ENCODE measurements at regions of chr6 and their contacts with region 1.

Region 1: DNA sequence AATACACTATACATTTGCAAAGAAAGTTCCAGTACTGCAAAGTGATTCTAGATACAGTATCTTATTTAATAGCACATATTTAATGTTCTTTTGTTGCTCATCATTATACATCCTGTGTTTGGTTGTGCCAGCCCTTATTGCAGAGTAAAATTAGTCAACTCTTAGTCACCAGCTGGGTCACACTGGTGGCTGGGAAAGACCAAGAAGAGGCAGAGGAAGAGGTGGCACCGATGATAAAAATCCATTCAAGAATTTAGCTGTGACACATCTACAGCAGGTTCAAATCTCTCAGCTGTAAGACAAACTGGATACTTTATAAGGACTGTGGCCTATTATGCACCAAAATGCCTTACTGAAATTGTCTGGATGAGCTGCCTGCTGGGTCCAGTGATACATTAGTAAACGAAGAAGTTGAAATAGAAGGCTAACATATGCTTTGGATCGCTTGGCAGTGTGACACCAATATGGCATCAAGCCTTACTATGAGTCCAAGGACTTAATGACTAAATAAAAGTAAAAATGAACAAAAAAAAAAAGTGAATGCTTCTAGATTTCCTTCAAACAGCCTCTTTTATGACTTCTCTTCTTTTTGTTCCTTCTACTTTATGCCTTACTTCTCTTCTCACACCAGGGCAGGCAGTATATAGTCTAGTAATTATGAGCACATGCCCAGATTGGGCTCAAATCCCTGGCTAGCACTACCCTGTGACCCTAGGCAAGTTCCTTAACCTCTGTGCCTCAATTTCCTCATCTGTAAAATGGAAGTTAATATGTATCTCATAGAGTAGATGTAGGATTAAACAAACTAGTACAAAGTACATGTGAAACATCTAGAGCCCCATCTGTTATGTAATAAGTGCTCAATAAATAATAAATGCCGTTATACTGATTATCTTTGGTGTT is 29.4 kb upstream of the RNF8 start:
- DNase-seq: no peak
- ATAC-seq: no peak
- H3K4me3 Mint-ChIP-seq: no peak overlapping the region
- H3K27ac Mint-ChIP-seq: no peak overlapping the region
- H3K4me1 Mint-ChIP-seq: peaks cover 7% of the 10 kb centered on the region
- H3K27me3 Mint-ChIP-seq: no peaks in the 10 kb centered on the region

Region 2: DNA sequence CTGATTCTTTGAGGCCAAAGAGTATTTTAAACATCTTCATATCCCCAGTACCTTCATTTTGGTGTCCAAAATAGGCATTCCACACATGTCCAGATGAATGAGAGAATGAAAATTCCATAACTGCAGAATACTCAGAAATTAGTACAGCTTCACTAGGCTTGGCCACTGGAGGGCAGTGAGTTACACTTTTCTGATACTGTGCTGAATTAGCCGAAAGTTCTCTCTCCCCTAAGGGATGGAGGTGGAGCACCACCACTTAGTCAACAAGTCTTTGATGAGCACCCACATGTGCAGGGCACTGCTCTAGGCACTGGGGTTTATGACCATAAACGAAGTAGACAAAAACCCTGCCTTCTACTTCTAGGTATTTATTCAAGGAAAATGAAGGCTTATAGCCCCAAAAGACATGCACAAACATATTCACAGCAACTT is 20.4 kb before region 1 on chr6:
- CTCF ChIA-PET with region 1: interaction called, 25 read pairs
- POLR2A ChIA-PET with region 1: no interaction called
- DNase-seq: peak; percentile 33
- ATAC-seq: no peak
- H3K4me3 Mint-ChIP-seq: no peak overlapping the region
- H3K27ac Mint-ChIP-seq: no peak overlapping the region
- H3K4me1 Mint-ChIP-seq: peaks cover 9% of the 10 kb centered on the region
- H3K27me3 Mint-ChIP-seq: no peaks in the 10 kb centered on the region

Region 3: DNA sequence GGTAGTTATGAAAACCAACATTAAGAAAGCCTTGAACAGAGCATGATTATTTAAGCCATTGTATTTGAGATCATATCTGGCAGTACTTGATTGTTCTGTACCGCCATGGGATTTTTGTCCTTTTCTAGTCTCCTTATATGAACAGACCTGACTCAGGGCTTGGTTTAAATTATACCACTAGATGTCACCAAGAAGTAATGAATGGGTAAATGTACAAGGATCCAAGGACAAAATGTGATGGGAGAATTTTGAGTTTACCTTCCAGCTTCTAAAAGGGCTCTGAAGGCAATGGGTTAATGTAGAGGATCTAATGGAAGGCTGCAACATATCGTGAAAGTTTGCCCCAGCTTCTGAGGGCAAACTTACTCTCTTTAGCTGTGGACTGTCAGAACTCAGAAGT is 41.4 kb after region 1 on chr6:
- CTCF ChIA-PET with region 1: interaction called, 10 read pairs
- POLR2A ChIA-PET with region 1: no interaction called
- DNase-seq: no peak
- ATAC-seq: no peak
- H3K4me3 Mint-ChIP-seq: no peak overlapping the region
- H3K27ac Mint-ChIP-seq: no peak overlapping the region
- H3K4me1 Mint-ChIP-seq: peaks cover 10% of the 10 kb centered on the region
- H3K27me3 Mint-ChIP-seq: no peaks in the 10 kb centered on the region

Region 4: GRCh38 chr6:37432916-37433656 is 108.7 kb after region 1 on chr6 and contains the start of gene CMTR1:
- CTCF ChIA-PET with region 1: interaction called, 12 read pairs
- POLR2A ChIA-PET with region 1: no interaction called
- DNase-seq: peak; percentile 97
- ATAC-seq: peak; percentile 95
- H3K4me3 Mint-ChIP-seq: peak within 1 kb of the TSS; percentile 92
- H3K27ac Mint-ChIP-seq: peak within 1 kb of the TSS; percentile 98
- H3K4me1 Mint-ChIP-seq: peaks cover 47% of the 10 kb centered on the region
- H3K27me3 Mint-ChIP-seq: peaks cover 10% of the 10 kb centered on the region
- total RNA-seq, gene CMTR1: 71.7 to 74.2 TPM

Region 5: GRCh38 chr6:37691904-37692806 is 367.8 kb after region 1 on chr6:
- CTCF ChIA-PET with region 1: interaction called, 19 read pairs
- POLR2A ChIA-PET with region 1: no interaction called
- DNase-seq: peak; percentile 82
- ATAC-seq: peak; percentile 65
- H3K4me3 Mint-ChIP-seq: no peak overlapping the region
- H3K27ac Mint-ChIP-seq: no peak overlapping the region
- H3K4me1 Mint-ChIP-seq: peaks cover 15% of the 10 kb centered on the region
- H3K27me3 Mint-ChIP-seq: peaks cover 33% of the 10 kb centered on the region

Measured in activated CD8-positive, alpha-beta T cell treated with anti-CD3 and anti-CD28 coated beads, Interleukin-2, amount 10 ng/mL, durations not matched to agents 7 days and 5 days (primary cell).